ENCODE measurements at regions of chr9 and their contacts with region 1.

Region 1: GRCh38 chr9:128420060-128420650 is 502 bp upstream of the CERCAM start:
- DNase-seq: peak; percentile 64
- H3K4me3 ChIP-seq: peak overlapping the region; percentile 63 to 71 (median 66)
- H3K27ac ChIP-seq: peak overlapping the region; percentile 24
- H3K4me1 ChIP-seq: peaks cover 27% of the 10 kb centered on the region
- H3K27me3 ChIP-seq: no peaks in the 10 kb centered on the region
- CTCF ChIP-seq: peak; percentile 41 to 75

Region 2: GRCh38 chr9:128191406-128192046 is 228.6 kb before region 1 on chr9 and contains the start of gene CIZ1:
- CTCF ChIA-PET with region 1: no interaction called
- dilution Hi-C with region 1: no loop called
- in situ Hi-C with region 1: no loop called
- intact Hi-C with region 1: loop called (anchors 1 kb)
- DNase-seq: peak; percentile 63
- H3K4me3 ChIP-seq: peak within 1 kb of the TSS; percentile 84 to 90 (median 88)
- H3K27ac ChIP-seq: peak within 1 kb of the TSS; percentile 26
- H3K4me1 ChIP-seq: peaks cover 19% of the 10 kb centered on the region
- H3K27me3 ChIP-seq: no peaks in the 10 kb centered on the region
- CTCF ChIP-seq: peak; percentile 41 to 72
- total RNA-seq, gene CIZ1: 36.0 to 109 TPM

Region 3: GRCh38 chr9:128370826-128371621 is 49.1 kb before region 1 on chr9 and contains the start of gene URM1:
- CTCF ChIA-PET with region 1: interaction called, 3 read pairs
- dilution Hi-C with region 1: no loop called
- in situ Hi-C with region 1: no loop called
- intact Hi-C with region 1: loop called (anchors 2 kb)
- DNase-seq: peak; percentile 98
- H3K4me3 ChIP-seq: peak within 1 kb of the TSS; percentile 86 to 94 (median 92)
- H3K27ac ChIP-seq: peak within 1 kb of the TSS; percentile 74
- H3K4me1 ChIP-seq: peaks cover 15% of the 10 kb centered on the region
- H3K27me3 ChIP-seq: no peaks in the 10 kb centered on the region
- CTCF ChIP-seq: peak in 1 of 2 donors; percentile 22
- total RNA-seq, gene URM1: 24.5 to 53.7 TPM

Region 4: GRCh38 chr9:128438343-128439109 is 18.4 kb after region 1 on chr9:
- CTCF ChIA-PET with region 1: interaction called, 13 read pairs
- dilution Hi-C with region 1: no loop called
- in situ Hi-C with region 1: no loop called
- intact Hi-C with region 1: no loop called
- DNase-seq: peak; percentile 47
- H3K4me3 ChIP-seq: no peak overlapping the region
- H3K27ac ChIP-seq: no peak overlapping the region
- H3K4me1 ChIP-seq: no peaks in the 10 kb centered on the region
- H3K27me3 ChIP-seq: no peaks in the 10 kb centered on the region
- CTCF ChIP-seq: peak; percentile 78 to 96

Region 5: GRCh38 chr9:128470560-128470959 is 50.4 kb after region 1 on chr9:
- CTCF ChIA-PET with region 1: no interaction called
- dilution Hi-C with region 1: no loop called
- in situ Hi-C with region 1: no loop called
- intact Hi-C with region 1: no loop called
- DNase-seq: no peak
- H3K4me3 ChIP-seq: no peak overlapping the region
- H3K27ac ChIP-seq: no peak overlapping the region
- H3K4me1 ChIP-seq: no peaks in the 10 kb centered on the region
- H3K27me3 ChIP-seq: no peaks in the 10 kb centered on the region
- CTCF ChIP-seq: no peak

Region 6: GRCh38 chr9:129028192-129028957 is 608.2 kb after region 1 on chr9 and contains the start of gene SH3GLB2:
- CTCF ChIA-PET with region 1: no interaction called
- dilution Hi-C with region 1: no loop called
- in situ Hi-C with region 1: no loop called
- intact Hi-C with region 1: loop called (anchors 5 kb)
- DNase-seq: peak; percentile 86
- H3K4me3 ChIP-seq: peak within 1 kb of the TSS; percentile 43 to 86 (median 79)
- H3K27ac ChIP-seq: peak within 1 kb of the TSS; percentile 37
- H3K4me1 ChIP-seq: peaks cover 27% of the 10 kb centered on the region
- H3K27me3 ChIP-seq: no peaks in the 10 kb centered on the region
- CTCF ChIP-seq: peak; percentile 71 to 86
- total RNA-seq, gene SH3GLB2: 48.0 to 54.5 TPM

Measured in mammary epithelial cell (primary cell).